Activated CD4-positive, alpha-beta memory T cell treated with anti-CD3 and anti-CD28 coated beads for 36 hours (primary cell): ENCODE measurements at regions of chr21 and their contacts with region 1.

Region 1: DNA sequence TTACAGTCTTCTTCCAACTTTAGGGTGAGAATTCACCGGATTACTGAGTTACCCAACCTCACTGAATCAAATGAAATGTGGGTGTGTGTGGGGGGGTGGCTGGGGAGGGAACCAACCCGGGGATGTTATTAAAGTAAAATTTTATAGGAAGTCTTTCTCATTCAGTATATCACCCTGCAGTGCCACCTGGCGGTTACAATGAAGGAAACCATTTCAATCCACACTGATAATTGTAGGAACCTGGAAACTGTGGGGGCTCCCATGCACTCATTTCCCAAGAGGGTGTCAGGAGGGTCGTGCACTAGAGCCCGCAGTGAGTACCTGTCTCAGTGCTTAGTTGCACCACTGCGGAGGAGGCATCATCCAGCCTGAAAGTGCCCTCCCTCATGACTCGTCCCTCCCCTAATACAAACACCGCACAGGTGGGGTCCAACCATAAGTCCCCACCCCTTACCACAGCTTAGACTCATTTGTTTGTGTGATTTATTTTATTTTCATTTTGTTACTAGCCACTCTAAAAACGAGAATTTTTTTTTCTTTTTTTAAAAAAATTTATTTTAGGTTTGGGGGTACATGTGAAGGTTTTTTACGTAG is 29.1 kb upstream of the IGSF5 start:
- DNase-seq: peak; percentile 43
- H3K4me3 Mint-ChIP-seq: no peak overlapping the region
- H3K27ac Mint-ChIP-seq: no peak overlapping the region
- H3K4me1 Mint-ChIP-seq: no peaks in the 10 kb centered on the region
- H3K27me3 Mint-ChIP-seq: peaks cover 1% of the 10 kb centered on the region

Region 2: DNA sequence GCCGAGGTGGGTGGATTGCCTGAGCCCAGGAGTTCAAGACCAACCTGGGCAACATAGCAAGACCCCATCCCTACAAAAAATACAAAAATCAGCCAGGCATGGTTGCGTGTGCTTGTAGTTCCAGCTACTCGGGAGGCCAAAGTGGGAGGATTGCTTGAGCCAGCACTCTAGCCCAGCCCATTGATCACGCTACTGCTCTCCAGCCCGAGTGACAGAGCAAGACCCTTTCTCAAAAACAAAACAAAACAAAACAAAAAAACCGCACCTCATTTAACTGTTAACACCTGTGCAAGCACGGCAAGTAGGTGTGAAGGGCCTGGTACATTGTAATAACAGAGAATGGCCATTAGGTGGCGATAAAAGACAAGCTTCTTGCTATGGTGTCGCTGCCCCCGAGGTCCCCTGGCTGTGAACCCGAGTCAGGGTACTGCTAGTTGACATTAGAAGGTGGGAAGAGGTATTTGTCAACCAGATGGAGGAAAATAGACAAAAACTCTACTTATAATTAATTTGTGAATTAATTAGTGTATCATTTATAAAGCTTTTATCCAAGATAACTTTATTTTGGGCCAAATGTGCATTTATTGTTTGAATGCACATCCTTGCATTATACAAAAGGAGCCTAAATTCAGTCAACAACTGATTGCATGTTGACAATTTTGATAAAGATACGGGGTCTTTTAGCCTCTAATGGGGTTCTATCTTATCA is 197.6 kb before region 1 on chr21:
- CTCF ChIA-PET with region 1: interaction called, 19 read pairs
- POLR2A ChIA-PET with region 1: no interaction called
- intact Hi-C with region 1: no loop called
- DNase-seq: peak; percentile 37
- H3K4me3 Mint-ChIP-seq: no peak overlapping the region
- H3K27ac Mint-ChIP-seq: no peak overlapping the region
- H3K4me1 Mint-ChIP-seq: peaks cover 2% of the 10 kb centered on the region
- H3K27me3 Mint-ChIP-seq: peaks cover 1% of the 10 kb centered on the region